CD4-positive, alpha-beta memory T cell (primary cell): ENCODE measurements at regions of chr12 and their contacts with region 1.

Region 1: DNA sequence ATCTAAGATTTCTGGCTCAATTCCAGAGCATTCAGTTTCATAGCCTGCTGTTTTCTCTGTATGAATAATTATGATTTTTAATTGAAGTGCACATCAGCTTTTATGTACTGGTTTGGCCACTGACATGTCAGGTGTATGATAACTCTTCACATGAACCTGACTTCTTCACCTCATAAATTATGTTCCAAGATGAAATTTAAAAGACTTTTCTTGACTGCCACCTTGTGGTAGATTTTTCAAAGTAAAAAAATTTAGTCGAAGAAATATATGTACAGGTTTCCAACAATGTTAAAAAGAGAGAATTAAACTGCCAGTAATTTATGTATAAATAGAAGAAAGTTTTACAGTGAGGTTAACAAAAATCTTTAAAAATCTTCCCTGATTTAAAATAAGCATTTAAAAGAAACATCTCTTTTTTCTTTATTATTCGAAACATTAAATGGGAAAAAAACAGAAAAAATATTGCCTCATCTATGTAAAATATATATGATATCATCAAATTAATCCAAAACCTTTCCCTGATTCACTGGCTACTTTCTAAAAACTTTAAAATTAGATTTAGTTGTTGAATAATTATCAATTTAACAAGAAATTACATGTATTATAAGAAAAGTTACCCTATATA is 124.9 kb upstream of the ATXN7L3B start:
- DNase-seq: peak in 1 of 5 donors; percentile 1
- H3K4me3 ChIP-seq: no peak overlapping the region
- H3K4me3 Mint-ChIP-seq: no peak overlapping the region
- H3K27ac ChIP-seq: no peak overlapping the region
- H3K27ac Mint-ChIP-seq: no peak overlapping the region
- H3K4me1 ChIP-seq: no peaks in the 10 kb centered on the region
- H3K4me1 Mint-ChIP-seq: no peaks in the 10 kb centered on the region
- H3K27me3 ChIP-seq: no peaks in the 10 kb centered on the region
- H3K27me3 Mint-ChIP-seq: peaks cover 2 to 3% of the 10 kb centered on the region in 2 donors

Region 2: GRCh38 chr12:74441872-74442271 is 29.2 kb after region 1 on chr12:
- CTCF ChIA-PET with region 1: no interaction called
- POLR2A ChIA-PET with region 1: no interaction called
- intact Hi-C with region 1: no loop called
- DNase-seq: no peak
- H3K4me3 ChIP-seq: no peak overlapping the region
- H3K4me3 Mint-ChIP-seq: no peak overlapping the region
- H3K27ac ChIP-seq: no peak overlapping the region
- H3K27ac Mint-ChIP-seq: no peak overlapping the region
- H3K4me1 ChIP-seq: no peaks in the 10 kb centered on the region
- H3K4me1 Mint-ChIP-seq: no peaks in the 10 kb centered on the region
- H3K27me3 ChIP-seq: no peaks in the 10 kb centered on the region
- H3K27me3 Mint-ChIP-seq: peaks cover 0 to 3% of the 10 kb centered on the region in 2 donors

Region 3: DNA sequence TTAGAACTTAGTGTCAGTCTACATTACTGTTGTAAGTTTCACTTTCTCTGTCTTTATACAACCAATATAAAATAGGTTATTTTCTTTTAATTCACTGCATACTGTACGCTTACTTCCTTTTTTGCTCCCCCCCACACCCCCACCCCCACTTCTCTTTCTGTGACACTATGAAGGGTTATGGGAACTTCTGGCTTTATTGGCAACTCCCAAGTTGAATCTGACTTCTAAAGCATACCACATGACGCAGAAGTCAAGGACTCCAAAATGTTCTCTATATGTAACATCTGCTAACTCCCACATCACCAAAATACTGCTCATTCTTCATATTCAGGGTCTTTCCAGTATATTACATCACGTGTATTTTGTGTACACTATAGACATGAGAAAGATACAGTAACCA is 43.7 kb after region 1 on chr12:
- CTCF ChIA-PET with region 1: no interaction called
- POLR2A ChIA-PET with region 1: no interaction called
- intact Hi-C with region 1: no loop called
- DNase-seq: no peak
- H3K4me3 ChIP-seq: no peak overlapping the region
- H3K4me3 Mint-ChIP-seq: no peak overlapping the region
- H3K27ac ChIP-seq: no peak overlapping the region
- H3K27ac Mint-ChIP-seq: no peak overlapping the region
- H3K4me1 ChIP-seq: no peaks in the 10 kb centered on the region
- H3K4me1 Mint-ChIP-seq: peaks cover 0 to 1% (median 0%) of the 10 kb centered on the region in 4 donors
- H3K27me3 ChIP-seq: no peaks in the 10 kb centered on the region
- H3K27me3 Mint-ChIP-seq: no peaks in the 10 kb centered on the region

Region 4: GRCh38 chr12:74537707-74538385 is 125.1 kb after region 1 on chr12 and contains the start of gene ATXN7L3B:
- CTCF ChIA-PET with region 1: no interaction called
- POLR2A ChIA-PET with region 1: no interaction called
- intact Hi-C with region 1: loop called (anchors 2 kb)
- DNase-seq: peak; percentile 95 to 97 (median 97)
- H3K4me3 ChIP-seq: peak within 1 kb of the TSS; percentile 92 to 99
- H3K4me3 Mint-ChIP-seq: peak within 1 kb of the TSS; percentile 81 to 99 (median 96)
- H3K27ac ChIP-seq: peak within 1 kb of the TSS; percentile 95
- H3K27ac Mint-ChIP-seq: peak within 1 kb of the TSS; percentile 97 to 100 (median 99)
- H3K4me1 ChIP-seq: peaks cover 48% of the 10 kb centered on the region
- H3K4me1 Mint-ChIP-seq: peaks cover 39 to 60% (median 49%) of the 10 kb centered on the region in 4 donors
- H3K27me3 ChIP-seq: no peaks in the 10 kb centered on the region
- H3K27me3 Mint-ChIP-seq: no peaks in the 10 kb centered on the region
- total RNA-seq, gene ATXN7L3B: 45.1 to 46.2 TPM